ENCODE measurements at regions of chr18 and their contacts with region 1.

Region 1: DNA sequence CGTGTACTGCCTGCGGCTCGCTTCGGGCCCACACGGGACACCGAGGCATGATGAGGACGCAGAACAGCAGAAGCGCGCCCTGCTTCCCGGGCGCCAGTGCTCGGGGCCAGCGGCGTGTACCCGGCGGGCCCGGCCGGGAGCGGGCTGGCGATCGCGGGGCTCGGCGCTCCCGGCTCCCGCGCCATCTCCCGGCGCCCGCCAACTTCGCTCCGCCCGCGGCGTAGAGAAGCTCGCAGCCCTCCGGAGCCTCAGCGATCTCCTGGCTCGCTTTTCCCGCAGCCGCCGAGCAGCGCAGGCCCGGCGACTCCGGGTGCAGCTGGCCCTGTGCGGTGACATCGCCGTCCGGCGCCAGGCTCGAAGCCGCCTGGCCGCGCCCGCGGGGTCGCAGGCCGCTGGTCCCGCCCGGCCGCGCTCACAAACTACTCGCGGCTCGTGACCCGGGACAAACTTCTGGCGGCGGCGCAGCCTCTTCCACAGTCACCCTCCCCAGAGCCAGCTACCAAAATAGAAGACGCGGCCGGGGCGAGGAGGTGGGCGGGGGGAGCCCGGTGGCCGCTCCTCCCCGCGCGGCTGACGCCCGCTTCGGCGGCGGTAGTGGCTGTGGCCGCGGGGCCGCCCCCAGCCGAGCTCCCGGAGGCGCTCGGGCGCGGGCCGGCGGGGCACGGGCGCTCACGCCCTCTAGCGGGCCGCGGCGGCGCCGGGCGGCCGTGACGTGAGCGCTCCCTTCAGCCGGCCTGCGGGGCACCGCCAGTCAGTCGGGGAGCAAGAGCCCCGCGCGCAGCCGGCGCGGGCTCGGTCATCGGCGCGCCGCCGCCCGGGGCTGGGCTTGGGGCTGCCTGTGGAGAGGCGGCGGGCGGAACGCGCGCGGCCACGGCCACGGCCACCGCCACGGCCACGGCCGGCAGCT is at the start of gene PTPRM:
- DNase-seq: peak; percentile 93 to 94
- ATAC-seq: peak; percentile 88 to 94 (median 92)
- H3K4me3 ChIP-seq: peak within 1 kb of the TSS; percentile 76 to 95 (median 88)
- H3K27ac ChIP-seq: peak within 1 kb of the TSS; percentile 95 to 100 (median 98)
- H3K4me1 ChIP-seq: peaks cover 0 to 64% (median 34%) of the 10 kb centered on the region in 9 donors
- H3K27me3 ChIP-seq: peaks cover 0 to 60% (median 0%) of the 10 kb centered on the region in 7 donors
- CTCF ChIP-seq: peak in 8 of 9 donors; percentile 12 to 79 (median 42)
- total RNA-seq, gene PTPRM: 104 to 170 (median 145) TPM

Region 2: GRCh38 chr18:7272311-7273049 is 294.3 kb before region 1 on chr18:
- intact Hi-C with region 1: loop called (anchors 1 to 10 kb)
- DNase-seq: peak; percentile 66 to 69
- ATAC-seq: peak; percentile 66 to 94 (median 88)
- H3K4me3 ChIP-seq: peak overlapping the region in 8 of 10 donors; percentile 15 to 39 (median 34)
- H3K27ac ChIP-seq: peak overlapping the region; percentile 61 to 87 (median 77)
- H3K4me1 ChIP-seq: peaks cover 7 to 26% (median 21%) of the 10 kb centered on the region in 9 donors
- H3K27me3 ChIP-seq: no peaks in the 10 kb centered on the region
- CTCF ChIP-seq: peak; percentile 39 to 74 (median 59)

Region 3: DNA sequence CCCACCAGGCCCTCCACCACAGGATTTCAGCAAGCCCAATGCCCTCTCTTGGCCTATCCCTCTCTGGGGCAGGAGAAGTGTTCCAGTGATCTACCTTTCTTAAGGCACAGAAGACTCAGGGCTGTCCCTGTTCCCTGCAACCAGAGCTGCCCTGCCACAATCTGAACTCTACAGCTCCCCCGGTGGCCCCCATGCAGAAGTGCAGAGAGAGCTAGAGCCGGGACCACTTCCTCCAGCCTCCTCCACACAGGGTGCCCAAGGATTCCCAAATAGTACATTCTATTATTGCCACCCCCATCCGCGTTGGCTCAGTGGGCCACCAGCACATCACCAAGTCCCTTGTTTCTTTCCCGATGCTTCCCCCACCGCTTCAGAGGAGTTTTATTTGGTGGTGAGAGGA is 114.5 kb before region 1 on chr18:
- intact Hi-C with region 1: loop called in 3 of 10 experiments (anchors 5 to 10 kb)
- DNase-seq: peak; percentile 27 to 31
- ATAC-seq: peak in 7 of 8 donors; percentile 53 to 87 (median 71)
- H3K4me3 ChIP-seq: no peak overlapping the region
- H3K27ac ChIP-seq: no peak overlapping the region
- H3K4me1 ChIP-seq: peaks cover 0 to 17% (median 0%) of the 10 kb centered on the region in 9 donors
- H3K27me3 ChIP-seq: no peaks in the 10 kb centered on the region
- CTCF ChIP-seq: peak; percentile 45 to 74 (median 65)

Region 4: GRCh38 chr18:7467710-7468466 is 98.9 kb before region 1 on chr18:
- intact Hi-C with region 1: loop called in 4 of 10 experiments (anchors 2 to 10 kb)
- DNase-seq: no peak
- ATAC-seq: no peak
- H3K4me3 ChIP-seq: no peak overlapping the region
- H3K27ac ChIP-seq: no peak overlapping the region
- H3K4me1 ChIP-seq: peaks cover 0 to 39% (median 18%) of the 10 kb centered on the region in 9 donors
- H3K27me3 ChIP-seq: no peaks in the 10 kb centered on the region
- CTCF ChIP-seq: no peak

Region 5: DNA sequence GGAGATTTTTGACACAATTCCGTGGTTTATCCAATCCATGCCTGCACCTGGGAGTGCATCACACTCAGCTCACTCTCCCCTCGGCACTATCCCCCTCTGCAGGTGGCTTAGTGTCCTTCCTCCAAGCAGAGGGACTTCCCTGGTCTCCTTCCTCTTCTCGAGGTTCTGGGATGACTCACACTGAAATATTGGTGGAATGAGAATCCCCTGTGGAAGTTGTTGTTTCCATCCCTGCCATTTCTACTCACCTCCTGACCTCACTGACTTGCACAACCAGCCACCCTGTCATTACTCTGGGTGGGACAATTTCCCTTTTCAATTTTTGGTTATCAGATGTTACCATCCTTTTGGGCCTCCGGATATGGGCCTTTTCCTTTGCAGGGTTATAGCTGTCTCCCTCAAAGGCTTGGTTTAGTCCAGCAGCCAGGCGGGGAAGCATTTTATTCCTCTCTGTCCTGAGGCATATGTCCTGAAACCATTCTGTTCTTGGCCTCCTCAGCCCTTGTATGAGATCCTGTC is 60.2 kb after region 1 on chr18:
- intact Hi-C with region 1: loop called in 2 of 10 experiments (anchors 2 to 5 kb)
- DNase-seq: peak in 1 of 2 donors; percentile 34
- ATAC-seq: peak; percentile 42 to 70 (median 58)
- H3K4me3 ChIP-seq: no peak overlapping the region
- H3K27ac ChIP-seq: peak overlapping the region in 8 of 10 donors; percentile 16 to 62 (median 48)
- H3K4me1 ChIP-seq: peaks cover 25 to 99% (median 79%) of the 10 kb centered on the region in 9 donors
- H3K27me3 ChIP-seq: no peaks in the 10 kb centered on the region
- CTCF ChIP-seq: peak in 6 of 9 donors; percentile 17 to 40 (median 30)

Region 6: GRCh38 chr18:7879717-7880116 is 312.9 kb after region 1 on chr18:
- intact Hi-C with region 1: loop called in 1 of 10 experiments (anchors 10 kb)
- DNase-seq: no peak
- ATAC-seq: no peak
- H3K4me3 ChIP-seq: no peak overlapping the region
- H3K27ac ChIP-seq: peak overlapping the region in 2 of 10 donors; percentile 21 to 56
- H3K4me1 ChIP-seq: peaks cover 0 to 67% (median 40%) of the 10 kb centered on the region in 9 donors
- H3K27me3 ChIP-seq: no peaks in the 10 kb centered on the region
- CTCF ChIP-seq: no peak

Region 7: DNA sequence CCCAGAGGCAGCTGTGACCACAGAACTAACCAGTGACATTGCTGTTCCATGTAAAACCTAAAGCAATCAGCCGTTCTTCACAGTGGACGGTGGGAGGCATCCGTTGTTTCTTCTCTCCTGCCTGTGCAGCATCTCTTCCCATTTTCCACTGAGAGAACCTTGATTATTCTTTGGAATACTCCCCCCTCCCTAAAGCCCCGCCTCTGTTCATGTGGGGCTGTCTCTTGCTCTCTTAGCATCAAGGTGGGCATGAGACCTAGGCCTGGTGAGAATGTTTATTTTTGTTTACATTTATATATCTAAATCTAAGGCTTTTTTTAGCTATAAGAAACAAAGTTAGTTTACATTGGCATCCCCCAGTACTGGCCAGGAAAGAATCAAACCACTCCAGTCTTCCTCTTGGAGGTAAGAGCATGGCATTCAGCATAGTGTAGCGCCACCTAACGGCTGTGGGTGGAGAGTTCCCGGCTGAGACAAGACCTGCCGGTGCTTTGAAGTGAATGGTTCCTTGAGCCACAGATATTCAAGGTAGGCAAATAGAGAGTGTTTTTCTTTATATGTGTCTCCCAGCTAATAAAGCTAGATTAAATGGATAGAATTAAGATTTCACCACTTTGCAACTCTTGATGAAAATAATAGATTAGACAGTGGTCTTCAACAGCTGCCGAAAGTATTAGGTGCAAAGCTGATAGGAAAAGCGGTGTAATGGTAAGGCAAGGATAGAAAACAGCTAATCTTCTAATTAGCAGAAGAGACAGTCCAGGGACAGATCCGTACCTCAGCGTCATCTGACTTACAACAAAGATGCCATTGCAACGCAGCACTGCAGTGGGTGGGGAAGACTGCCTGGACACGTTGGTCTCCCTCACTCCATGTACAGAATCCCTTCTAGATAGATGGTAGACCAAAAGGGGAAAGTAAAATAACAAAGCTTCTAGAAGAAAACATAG is 822.8 kb after region 1 on chr18:
- intact Hi-C with region 1: loop called in 1 of 10 experiments (anchors 10 kb)
- DNase-seq: peak; percentile 59
- ATAC-seq: peak; percentile 81 to 90 (median 84)
- H3K4me3 ChIP-seq: no peak overlapping the region
- H3K27ac ChIP-seq: no peak overlapping the region
- H3K4me1 ChIP-seq: peaks cover 0 to 7% (median 0%) of the 10 kb centered on the region in 9 donors
- H3K27me3 ChIP-seq: no peaks in the 10 kb centered on the region
- CTCF ChIP-seq: peak; percentile 48 to 86 (median 79)

Measured in heart right ventricle (tissue), 16 donors.